Dorsolateral prefrontal cortex (tissue), 120 donors: ENCODE measurements at regions of chr5 and their contacts with region 1.

Region 1: DNA sequence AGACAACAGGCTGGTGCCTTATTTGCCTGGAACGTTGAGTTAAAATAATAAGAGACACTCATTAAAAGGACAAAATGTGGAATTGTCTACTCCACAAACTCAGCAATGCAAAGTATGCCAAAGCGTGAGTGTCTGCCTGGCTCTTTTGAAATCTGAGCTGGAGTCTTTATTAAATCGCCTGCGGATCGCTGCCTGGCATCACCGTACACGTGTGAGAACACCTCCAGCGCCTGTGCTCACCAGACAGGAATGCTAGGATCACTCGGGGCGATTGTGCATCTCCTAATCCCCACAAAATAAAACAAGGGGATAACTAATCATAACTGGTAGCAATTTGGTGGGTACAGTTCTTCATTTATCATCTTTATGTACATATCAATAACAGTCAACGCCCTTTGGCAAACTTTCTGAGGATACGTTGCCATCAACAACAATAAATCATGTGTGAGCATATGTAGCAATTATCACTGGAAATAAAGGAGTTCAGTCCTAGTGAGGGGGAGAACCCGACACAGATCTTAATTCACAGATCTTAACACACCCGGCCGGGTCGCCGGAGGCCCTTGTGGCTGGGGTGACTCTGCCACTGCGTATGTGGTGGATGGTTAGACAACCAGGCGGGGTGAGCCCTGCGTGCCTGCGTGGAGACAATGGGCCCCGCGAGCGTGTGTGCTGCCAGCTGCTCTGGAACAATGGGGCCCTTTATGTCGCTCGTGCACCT is 284.9 kb upstream of the IRX1 start:
- DNase-seq: peak in 9 of 10 donors; percentile 37 to 81 (median 65)
- H3K4me3 ChIP-seq: peak overlapping the region in 8 of 59 donors; percentile 3 to 40 (median 8)
- H3K27ac ChIP-seq: peak overlapping the region in 30 of 59 donors; percentile 1 to 85 (median 46)
- H3K27me3 ChIP-seq: peaks cover 0 to 19% (median 0%) of the 10 kb centered on the region in 45 donors
- CTCF ChIP-seq: peak in 2 of 56 donors; percentile 8 to 20

Region 2: GRCh38 chr5:3092664-3093063 is 218.0 kb before region 1 on chr5:
- intact Hi-C with region 1: no loop called
- DNase-seq: no peak
- H3K4me3 ChIP-seq: no peak overlapping the region
- H3K27ac ChIP-seq: no peak overlapping the region
- H3K27me3 ChIP-seq: peaks cover 0 to 4% (median 0%) of the 10 kb centered on the region in 45 donors
- CTCF ChIP-seq: no peak

Region 3: DNA sequence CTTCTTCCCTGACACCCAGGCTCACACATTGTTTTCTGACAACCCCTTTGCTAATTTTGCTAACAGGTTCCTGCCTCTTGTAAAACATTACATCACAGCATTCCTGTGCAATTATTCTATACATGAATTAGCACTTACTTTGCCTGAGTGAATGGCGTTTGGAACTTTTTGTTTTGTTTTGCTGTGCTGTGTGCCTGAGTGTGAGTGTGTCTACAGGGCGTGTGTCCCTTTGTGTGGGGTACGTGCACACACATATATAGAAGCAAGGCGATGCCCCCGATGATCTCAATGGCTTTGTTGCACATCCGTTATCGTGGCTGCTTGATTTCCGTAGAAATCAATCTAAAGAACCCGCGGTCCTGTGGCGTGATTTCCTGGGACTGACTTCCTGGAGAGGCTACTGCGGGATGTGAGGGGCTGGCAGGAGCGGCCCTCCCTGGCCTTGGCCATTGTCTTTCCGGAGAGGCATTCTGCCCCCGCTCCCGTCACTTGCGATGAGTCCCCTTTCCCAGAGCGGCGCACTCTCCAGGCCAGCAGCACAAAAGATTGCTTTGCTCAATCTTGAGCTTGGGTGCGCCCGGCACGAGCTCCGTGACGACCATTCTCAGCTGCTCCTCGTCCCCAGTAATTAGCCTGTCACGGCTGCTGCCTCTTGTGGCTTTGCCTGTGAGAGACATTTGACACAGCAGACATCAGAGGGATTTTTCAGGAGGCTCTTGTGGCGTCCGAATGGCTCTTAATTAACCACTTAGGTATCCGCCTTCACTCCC is 113.2 kb before region 1 on chr5:
- intact Hi-C with region 1: loop called in 1 of 2 experiments (anchors 5 kb)
- DNase-seq: peak in 5 of 10 donors; percentile 17 to 51 (median 32)
- H3K4me3 ChIP-seq: peak overlapping the region in 54 of 59 donors; percentile 7 to 64 (median 41)
- H3K27ac ChIP-seq: peak overlapping the region in 2 of 59 donors; percentile 46 to 54
- H3K27me3 ChIP-seq: peaks cover 5 to 91% (median 73%) of the 10 kb centered on the region in 45 donors
- CTCF ChIP-seq: peak in 3 of 56 donors; percentile 6 to 17 (median 16)

Region 4: GRCh38 chr5:3265127-3265885 is 45.4 kb before region 1 on chr5:
- intact Hi-C with region 1: loop called in 1 of 2 experiments (anchors 10 kb)
- DNase-seq: no peak
- H3K4me3 ChIP-seq: peak overlapping the region in 2 of 59 donors; percentile 8 to 20
- H3K27ac ChIP-seq: peak overlapping the region; percentile 18 to 99 (median 88)
- H3K27me3 ChIP-seq: peaks cover 0 to 13% (median 0%) of the 10 kb centered on the region in 45 donors
- CTCF ChIP-seq: no peak

Region 5: GRCh38 chr5:3345195-3345594 is 34.5 kb after region 1 on chr5:
- intact Hi-C with region 1: no loop called
- DNase-seq: no peak
- H3K4me3 ChIP-seq: no peak overlapping the region
- H3K27ac ChIP-seq: no peak overlapping the region
- H3K27me3 ChIP-seq: peaks cover 0 to 28% (median 4%) of the 10 kb centered on the region in 45 donors
- CTCF ChIP-seq: no peak